Activated CD4-positive, alpha-beta T cell treated with anti-CD3 and anti-CD28 coated beads for 36 hours (primary cell): ENCODE measurements at regions of chr1 and their contacts with region 1.

Region 1: GRCh38 chr1:205121660-205122488 is at the start of gene RBBP5:
- DNase-seq: peak; percentile 96
- ATAC-seq: peak; percentile 98
- H3K4me3 Mint-ChIP-seq: peak within 1 kb of the TSS; percentile 98
- H3K27ac Mint-ChIP-seq: peak within 1 kb of the TSS; percentile 100
- H3K4me1 Mint-ChIP-seq: peaks cover 38% of the 10 kb centered on the region
- H3K27me3 Mint-ChIP-seq: no peaks in the 10 kb centered on the region
- total RNA-seq, gene RBBP5: 23.1 to 24.3 TPM

Region 2: DNA sequence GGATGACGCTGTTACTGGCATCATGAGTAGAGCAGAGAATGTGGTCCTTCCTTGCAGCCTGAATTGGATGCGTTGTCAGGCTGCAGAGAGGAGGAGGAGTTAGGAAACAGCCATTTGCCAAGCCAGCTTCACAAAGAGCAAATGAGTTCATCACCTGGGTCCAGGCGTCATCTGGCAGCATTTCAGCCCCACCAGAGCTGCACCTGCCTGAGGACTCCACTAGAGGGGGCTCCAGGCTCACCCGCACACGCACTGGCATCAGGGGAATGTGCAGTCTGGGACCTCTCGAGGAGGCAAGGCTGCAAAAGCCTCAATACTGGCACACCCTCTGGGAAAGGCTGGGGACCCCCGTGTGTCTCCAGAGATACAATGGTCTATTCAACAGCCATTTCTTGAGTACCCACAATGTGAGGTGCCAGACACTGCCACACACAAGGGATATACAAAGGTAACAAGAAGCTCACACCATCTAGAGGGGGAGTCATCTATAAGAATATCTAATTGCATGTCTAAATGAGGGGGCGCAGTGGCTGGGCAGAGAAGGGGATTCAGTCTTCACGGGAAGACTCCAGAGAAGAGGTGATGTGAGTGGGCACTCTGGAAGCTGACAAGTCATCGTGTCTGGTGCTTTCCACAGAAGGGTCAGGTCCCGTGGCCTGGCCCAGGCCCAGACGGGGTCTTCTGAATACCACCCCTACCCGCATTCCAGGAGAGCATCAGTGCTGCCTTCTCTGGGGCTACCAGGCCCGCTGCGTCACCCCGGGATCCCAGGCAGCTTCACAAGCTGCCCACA is 132.4 kb before region 1 on chr1:
- CTCF ChIA-PET with region 1: interaction called, 12 read pairs
- POLR2A ChIA-PET with region 1: no interaction called
- intact Hi-C with region 1: no loop called
- DNase-seq: peak; percentile 82
- ATAC-seq: peak; percentile 89
- H3K4me3 Mint-ChIP-seq: no peak overlapping the region
- H3K27ac Mint-ChIP-seq: no peak overlapping the region
- H3K4me1 Mint-ChIP-seq: peaks cover 11% of the 10 kb centered on the region
- H3K27me3 Mint-ChIP-seq: peaks cover 5% of the 10 kb centered on the region

Region 3: GRCh38 chr1:205141236-205142101 is 19.6 kb after region 1 on chr1:
- CTCF ChIA-PET with region 1: interaction called, 25 read pairs
- POLR2A ChIA-PET with region 1: no interaction called
- intact Hi-C with region 1: loop called (anchors 1 kb)
- DNase-seq: peak; percentile 88
- ATAC-seq: peak; percentile 96
- H3K4me3 Mint-ChIP-seq: no peak overlapping the region
- H3K27ac Mint-ChIP-seq: no peak overlapping the region
- H3K4me1 Mint-ChIP-seq: peaks cover 3% of the 10 kb centered on the region
- H3K27me3 Mint-ChIP-seq: no peaks in the 10 kb centered on the region

Region 4: GRCh38 chr1:205211169-205211838 is 89.4 kb after region 1 on chr1 and contains the start of gene DSTYK:
- CTCF ChIA-PET with region 1: interaction called, 5 read pairs
- POLR2A ChIA-PET with region 1: interaction called, 3 read pairs
- intact Hi-C with region 1: loop called (anchors 1 kb)
- DNase-seq: peak; percentile 97
- ATAC-seq: peak; percentile 90
- H3K4me3 Mint-ChIP-seq: peak within 1 kb of the TSS; percentile 97
- H3K27ac Mint-ChIP-seq: peak within 1 kb of the TSS; percentile 95
- H3K4me1 Mint-ChIP-seq: peaks cover 54% of the 10 kb centered on the region
- H3K27me3 Mint-ChIP-seq: no peaks in the 10 kb centered on the region
- total RNA-seq, gene DSTYK: 9.4 to 12.3 TPM

Region 5: GRCh38 chr1:205255941-205256780 is 134.3 kb after region 1 on chr1:
- CTCF ChIA-PET with region 1: interaction called, 26 read pairs
- POLR2A ChIA-PET with region 1: no interaction called
- intact Hi-C with region 1: loop called in 1 of 2 experiments (anchors 1 kb)
- DNase-seq: peak; percentile 93
- ATAC-seq: peak; percentile 95
- H3K4me3 Mint-ChIP-seq: no peak overlapping the region
- H3K27ac Mint-ChIP-seq: no peak overlapping the region
- H3K4me1 Mint-ChIP-seq: peaks cover 2% of the 10 kb centered on the region
- H3K27me3 Mint-ChIP-seq: no peaks in the 10 kb centered on the region

Region 6: DNA sequence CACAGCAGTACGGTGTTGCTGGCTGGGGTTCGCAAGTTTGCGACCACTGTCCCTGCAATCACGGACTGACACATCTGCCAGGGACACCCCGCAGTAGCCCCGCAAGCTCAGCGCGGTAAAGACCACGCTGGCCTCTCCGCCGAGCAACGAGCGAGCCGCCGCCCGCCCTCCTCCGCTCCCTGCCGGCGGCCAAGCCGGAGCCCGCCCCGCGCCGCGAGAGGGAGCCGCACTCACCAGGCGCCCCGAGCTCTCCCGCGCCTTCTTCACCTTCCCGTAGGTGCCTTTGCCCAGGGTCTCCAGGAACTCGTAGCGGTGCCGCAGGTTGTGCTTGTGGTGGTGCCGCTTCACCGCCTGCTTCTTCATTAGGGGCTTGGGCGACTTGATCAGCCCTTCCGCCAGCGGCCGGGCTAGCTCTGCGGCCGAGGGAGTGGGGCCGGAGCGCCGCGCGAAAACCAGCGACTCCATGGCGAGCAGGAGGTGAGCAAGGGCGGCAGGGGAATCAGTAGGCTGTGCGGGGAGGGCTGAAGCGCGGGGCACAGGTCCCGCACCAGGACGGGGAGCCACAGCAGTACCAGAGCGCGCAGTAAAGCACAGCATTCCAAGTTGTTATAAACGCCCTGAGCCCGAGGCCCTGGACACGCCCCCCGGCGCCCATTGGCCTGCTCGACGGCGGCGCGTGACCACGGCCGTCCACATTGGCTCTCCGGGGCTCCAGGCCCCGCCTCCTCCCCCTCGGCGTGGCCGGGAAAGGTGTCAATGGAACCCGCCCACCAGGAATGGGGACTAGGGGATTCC is 199.5 kb after region 1 on chr1 and contains the start of gene NUAK2:
- CTCF ChIA-PET with region 1: interaction called, 4 read pairs
- POLR2A ChIA-PET with region 1: no interaction called
- intact Hi-C with region 1: loop called in 1 of 2 experiments (anchors 2 kb)
- DNase-seq: peak; percentile 90
- ATAC-seq: peak; percentile 85
- H3K4me3 Mint-ChIP-seq: peak within 1 kb of the TSS; percentile 88
- H3K27ac Mint-ChIP-seq: peak within 1 kb of the TSS; percentile 90
- H3K4me1 Mint-ChIP-seq: peaks cover 65% of the 10 kb centered on the region
- H3K27me3 Mint-ChIP-seq: no peaks in the 10 kb centered on the region
- total RNA-seq, gene NUAK2: 2.3 to 2.7 TPM